Kidney (tissue), 22 donors: ENCODE measurements at regions of chr20 and their contacts with region 1.

Region 1: GRCh38 chr20:9978397-9979004 is 56.3 kb upstream of the ANKEF1 start:
- DNase-seq: peak in 4 of 5 donors; percentile 34 to 90 (median 68)
- H3K4me3 ChIP-seq: no peak overlapping the region
- H3K27ac ChIP-seq: no peak overlapping the region
- H3K4me1 ChIP-seq: no peaks in the 10 kb centered on the region
- H3K27me3 ChIP-seq: no peaks in the 10 kb centered on the region
- CTCF ChIP-seq: peak; percentile 83

Region 2: DNA sequence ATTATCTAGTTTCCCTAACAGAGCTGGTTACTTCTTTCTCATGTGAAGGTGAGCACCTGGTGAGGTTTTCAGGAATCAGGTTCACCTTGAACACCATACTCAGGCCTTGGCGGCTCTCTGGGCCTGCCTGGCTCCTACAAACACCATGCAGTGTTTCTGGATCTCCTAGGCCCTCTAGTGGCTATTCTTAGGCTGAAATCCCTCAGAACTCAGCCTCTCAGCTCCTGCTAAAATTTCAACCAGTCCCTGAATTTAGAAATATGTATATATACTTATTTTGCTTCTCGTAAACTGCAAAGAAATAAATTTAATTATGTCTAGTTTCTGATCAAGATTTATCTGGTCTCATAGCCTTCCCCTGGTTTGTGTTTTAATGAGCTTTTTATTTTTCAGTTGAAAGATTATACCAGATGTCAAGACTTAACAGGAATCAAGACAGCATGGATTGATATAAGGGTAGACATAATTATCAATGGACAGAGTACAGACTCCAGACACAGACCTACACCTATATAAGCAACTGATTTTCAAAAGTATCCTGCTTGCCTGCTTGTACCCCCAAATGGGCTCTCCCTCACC is 112.2 kb after region 1 on chr20:
- intact Hi-C with region 1: loop called (anchors 10 kb)
- DNase-seq: peak in 3 of 5 donors; percentile 34 to 72 (median 64)
- H3K4me3 ChIP-seq: no peak overlapping the region
- H3K27ac ChIP-seq: no peak overlapping the region
- H3K4me1 ChIP-seq: no peaks in the 10 kb centered on the region
- H3K27me3 ChIP-seq: no peaks in the 10 kb centered on the region
- CTCF ChIP-seq: peak; percentile 62

Region 3: GRCh38 chr20:10427060-10427692 is 448.7 kb after region 1 on chr20:
- intact Hi-C with region 1: loop called (anchors 10 kb)
- DNase-seq: peak in 4 of 5 donors; percentile 48 to 92 (median 70)
- H3K4me3 ChIP-seq: no peak overlapping the region
- H3K27ac ChIP-seq: no peak overlapping the region
- H3K4me1 ChIP-seq: no peaks in the 10 kb centered on the region
- H3K27me3 ChIP-seq: no peaks in the 10 kb centered on the region
- CTCF ChIP-seq: peak; percentile 74